Dorsolateral prefrontal cortex (tissue), 120 donors: ENCODE measurements at regions of chr11 and their contacts with region 1.

Region 1: DNA sequence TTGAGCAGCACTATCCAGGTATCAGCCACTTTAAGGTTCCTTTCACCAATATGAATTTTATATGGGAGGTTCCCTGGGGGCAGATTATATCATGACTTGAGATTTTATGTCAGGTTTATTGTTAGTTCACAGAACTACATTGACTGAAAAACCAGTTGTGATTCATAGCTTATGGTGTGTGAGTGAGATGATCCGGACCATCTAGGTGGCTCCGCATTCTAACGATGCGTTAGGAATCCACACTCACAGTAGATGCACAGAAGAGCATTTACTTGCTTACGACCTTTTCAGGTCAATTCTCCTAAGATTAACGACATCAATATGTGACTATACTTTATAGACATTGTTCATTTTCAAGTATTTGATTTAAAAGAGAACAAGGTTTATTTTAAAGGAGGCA is 984.3 kb upstream of the CCDC90B start:
- DNase-seq: no peak
- H3K4me3 ChIP-seq: peak overlapping the region in 54 of 59 donors; percentile 5 to 68 (median 50)
- H3K27ac ChIP-seq: peak overlapping the region in 49 of 59 donors; percentile 3 to 100 (median 86)
- H3K27me3 ChIP-seq: no peaks in the 10 kb centered on the region
- CTCF ChIP-seq: peak in 1 of 56 donors; percentile 5

Region 2: GRCh38 chr11:84289381-84289906 is 19.0 kb after region 1 on chr11:
- intact Hi-C with region 1: no loop called
- DNase-seq: no peak
- H3K4me3 ChIP-seq: peak overlapping the region in 1 of 59 donors; percentile 5
- H3K27ac ChIP-seq: peak overlapping the region in 57 of 59 donors; percentile 7 to 81 (median 66)
- H3K27me3 ChIP-seq: no peaks in the 10 kb centered on the region
- CTCF ChIP-seq: no peak

Region 3: DNA sequence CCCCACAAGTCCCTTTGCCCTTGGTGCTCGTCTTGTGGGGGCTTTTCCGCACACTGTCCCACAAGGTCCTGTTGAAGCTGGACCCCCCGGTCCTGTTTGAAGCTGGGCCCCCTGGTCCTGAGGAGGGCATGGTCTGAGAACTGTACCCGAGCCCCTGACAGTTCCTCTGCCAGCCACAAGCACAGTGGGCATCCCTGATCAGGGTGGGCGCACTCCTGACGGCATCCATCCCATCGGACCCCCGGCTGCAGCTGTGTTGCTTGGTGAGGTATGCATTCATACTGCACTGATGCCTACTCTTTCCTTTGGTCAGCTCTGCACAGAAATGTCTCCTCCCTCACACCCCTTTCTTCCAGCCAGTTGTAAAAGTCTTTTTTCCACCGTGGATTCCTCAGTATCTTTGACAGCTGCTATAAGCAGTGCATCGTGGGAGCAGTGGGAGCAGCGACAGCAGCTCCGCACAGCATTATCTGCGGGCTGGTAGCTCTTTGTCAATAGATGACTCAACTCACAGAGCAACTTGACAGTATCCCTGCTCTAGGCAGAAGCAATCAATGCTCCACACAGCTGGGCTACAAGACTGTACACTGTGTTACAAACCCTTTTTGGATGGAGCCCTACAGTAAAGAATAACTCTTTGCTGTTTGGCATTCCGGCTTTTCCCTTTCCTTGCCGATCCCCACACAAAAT is 46.5 kb after region 1 on chr11:
- intact Hi-C with region 1: loop called (anchors 5 kb)
- DNase-seq: peak; percentile 8 to 90 (median 76)
- H3K4me3 ChIP-seq: peak overlapping the region; percentile 41 to 85 (median 69)
- H3K27ac ChIP-seq: peak overlapping the region; percentile 26 to 95 (median 89)
- H3K27me3 ChIP-seq: no peaks in the 10 kb centered on the region
- CTCF ChIP-seq: peak in 8 of 56 donors; percentile 13 to 38 (median 18)

Region 4: DNA sequence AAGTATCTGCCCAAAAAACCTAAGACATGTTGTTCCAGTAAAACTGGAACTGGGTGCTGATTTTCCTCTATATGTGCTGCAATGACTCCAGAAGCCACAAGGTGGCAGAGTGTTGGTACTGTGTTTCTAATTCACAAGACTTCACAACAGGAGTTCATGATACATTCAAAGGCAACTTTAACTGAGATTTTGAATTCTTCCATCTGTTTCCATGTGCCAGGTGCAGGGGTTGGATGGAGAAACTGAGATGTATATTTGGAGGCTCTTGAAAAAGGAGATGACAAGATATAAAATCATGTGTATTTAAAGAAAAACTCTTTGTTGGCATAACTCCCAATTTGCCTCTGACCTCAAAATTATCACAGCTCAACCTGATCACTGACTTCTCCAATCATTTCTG is 114.3 kb after region 1 on chr11:
- intact Hi-C with region 1: loop called (anchors 10 kb)
- DNase-seq: peak in 7 of 10 donors; percentile 38 to 81 (median 55)
- H3K4me3 ChIP-seq: no peak overlapping the region
- H3K27ac ChIP-seq: peak overlapping the region in 37 of 59 donors; percentile 1 to 74 (median 42)
- H3K27me3 ChIP-seq: no peaks in the 10 kb centered on the region
- CTCF ChIP-seq: peak; percentile 30 to 96 (median 87)

Region 5: DNA sequence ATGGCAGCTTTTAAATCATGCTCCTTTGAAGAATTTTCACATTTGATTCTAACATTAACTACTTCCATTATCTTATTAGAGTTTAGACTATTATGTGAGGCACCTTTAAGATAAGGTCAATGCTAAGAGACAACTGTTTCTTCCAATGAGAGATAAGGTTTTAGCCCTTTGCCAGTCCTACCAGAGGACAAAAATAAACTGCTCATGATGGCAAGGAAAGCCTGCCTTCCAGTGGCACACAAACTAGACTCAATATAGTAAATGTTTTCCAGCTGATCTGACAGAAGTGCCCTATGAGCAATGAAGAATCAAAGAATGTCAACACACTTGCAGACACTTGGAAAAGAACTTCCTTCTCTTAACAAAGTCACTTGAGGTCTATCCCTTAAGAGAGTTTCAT is 168.1 kb after region 1 on chr11:
- intact Hi-C with region 1: no loop called
- DNase-seq: no peak
- H3K4me3 ChIP-seq: peak overlapping the region in 1 of 59 donors; percentile 64
- H3K27ac ChIP-seq: peak overlapping the region in 3 of 59 donors; percentile 49 to 52 (median 51)
- H3K27me3 ChIP-seq: no peaks in the 10 kb centered on the region
- CTCF ChIP-seq: no peak